G401 (cell line): ENCODE measurements at regions of chr17 and their contacts with region 1.

Region 1: DNA sequence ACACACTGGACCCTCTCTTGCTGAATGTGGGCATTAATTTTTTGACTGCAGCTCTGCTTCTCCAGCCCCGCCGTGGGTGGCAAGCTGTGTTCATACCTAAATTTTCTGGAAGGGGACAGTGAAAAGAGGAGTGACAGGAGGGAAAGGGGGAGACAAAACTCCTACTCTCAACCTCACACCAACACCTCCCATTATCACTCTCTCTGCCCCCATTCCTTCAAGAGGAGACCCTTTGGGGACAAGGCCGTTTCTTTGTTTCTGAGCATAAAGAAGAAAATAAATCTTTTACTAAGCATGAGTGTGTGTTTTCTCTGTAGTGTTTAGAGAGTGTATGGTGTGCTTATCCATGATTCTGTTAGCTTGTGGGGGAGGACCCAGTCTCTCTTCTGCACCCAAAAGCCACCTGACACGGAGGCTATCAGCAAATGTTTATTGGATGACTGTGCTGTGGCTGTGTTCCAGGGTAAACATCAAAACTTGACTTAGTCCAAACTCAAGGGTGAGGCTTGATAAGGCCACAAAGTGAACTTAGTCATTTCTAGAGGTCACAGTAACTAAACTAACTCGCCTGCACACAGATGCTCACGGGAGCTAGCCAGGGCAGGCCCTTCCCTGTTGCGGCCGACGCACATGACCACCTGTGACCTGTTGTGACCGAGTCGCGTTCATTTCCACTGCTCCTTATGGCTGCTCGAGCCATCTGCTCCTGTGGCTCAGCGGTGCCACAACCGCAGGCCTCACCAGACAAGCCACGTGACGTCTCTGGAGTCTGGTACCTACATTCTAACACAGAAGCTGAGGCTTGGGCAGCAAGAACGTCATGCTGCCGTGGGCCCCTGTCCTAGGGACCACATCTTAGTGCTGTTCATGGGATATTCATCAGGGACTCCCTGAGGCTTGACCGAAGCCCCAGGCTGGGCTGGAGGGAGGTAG is 9.8 kb upstream of the MED11 start:
- DNase-seq: peak; percentile 83

Region 2: GRCh38 chr17:4565209-4566141 is 156.0 kb before region 1 on chr17:
- in situ Hi-C with region 1: loop called (anchors 10 kb)
- DNase-seq: peak; percentile 86

Region 3: GRCh38 chr17:4594931-4595684 is 126.4 kb before region 1 on chr17:
- in situ Hi-C with region 1: no loop called
- DNase-seq: no peak

Region 4: GRCh38 chr17:4833178-4833940 is 111.9 kb after region 1 on chr17 and contains the start of gene MINK1:
- in situ Hi-C with region 1: loop called (anchors 10 kb)
- DNase-seq: peak; percentile 91
- total RNA-seq, gene MINK1: 33.8 and 48.3 TPM in 2 replicates